ENCODE measurements at regions of chr6 and their contacts with region 1.

Region 1: DNA sequence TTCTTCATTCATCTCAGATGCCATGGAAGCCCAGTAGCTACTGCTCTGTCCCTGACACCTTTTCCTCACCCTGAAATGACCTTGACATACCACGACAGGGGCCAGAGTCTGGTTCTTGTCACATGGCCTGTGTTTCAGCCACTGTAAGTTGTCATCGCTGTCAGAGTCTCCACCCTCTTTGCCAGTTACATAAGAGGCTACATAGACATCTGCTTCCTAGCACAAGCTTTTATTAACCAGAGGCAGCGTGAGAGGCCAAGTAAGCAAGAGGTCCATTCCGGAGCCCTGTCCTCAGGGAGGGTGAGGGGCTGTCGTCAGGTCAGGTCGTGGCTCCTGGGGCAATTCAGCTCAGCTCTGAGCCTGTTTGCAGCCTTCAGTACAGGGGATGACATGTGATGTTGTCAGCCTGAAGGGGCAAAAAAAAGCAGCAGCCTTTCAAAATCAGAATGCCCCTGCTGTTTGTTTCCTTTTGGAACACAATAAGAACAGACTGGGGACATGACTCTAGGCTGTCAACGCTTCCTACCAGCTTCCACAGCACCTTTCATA is 146.3 kb downstream of the MTFR2 start:
- DNase-seq: peak; percentile 83 to 92 (median 85)
- ATAC-seq: peak; percentile 96 to 99 (median 98)
- H3K4me3 ChIP-seq: peak overlapping the region in 1 of 12 donors; percentile 16
- H3K27ac ChIP-seq: peak overlapping the region; percentile 67 to 90 (median 84)
- H3K4me1 ChIP-seq: peaks cover 0 to 77% (median 40%) of the 10 kb centered on the region in 12 donors
- H3K27me3 ChIP-seq: no peaks in the 10 kb centered on the region
- CTCF ChIP-seq: no peak
- POLR2A ChIP-seq: peak in 1 of 2 donors; percentile 40

Region 2: DNA sequence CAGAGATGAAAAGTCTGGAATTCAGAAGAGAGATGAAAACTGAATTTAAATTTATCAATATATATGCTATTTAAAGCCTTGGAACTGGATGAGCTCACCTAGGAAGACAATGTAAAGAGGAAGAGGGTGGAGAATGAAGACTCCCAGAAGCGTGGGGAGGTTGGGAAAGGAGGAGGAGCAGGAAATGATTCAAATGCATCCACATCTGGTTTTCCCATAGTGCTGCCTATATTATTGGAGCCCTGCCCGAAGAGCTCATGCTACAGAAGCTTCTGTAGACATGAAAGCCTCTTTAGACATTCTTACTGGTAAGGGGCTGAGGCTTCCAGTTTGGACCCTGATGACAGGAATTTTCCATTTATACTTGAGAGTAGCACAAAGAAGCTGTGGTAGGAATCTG is 233.1 kb before region 1 on chr6:
- intact Hi-C with region 1: no loop called
- DNase-seq: no peak
- ATAC-seq: peak in 2 of 4 donors; percentile 40 to 76
- H3K4me3 ChIP-seq: no peak overlapping the region
- H3K27ac ChIP-seq: peak overlapping the region in 9 of 12 donors; percentile 6 to 69 (median 53)
- H3K4me1 ChIP-seq: peaks cover 0 to 18% (median 8%) of the 10 kb centered on the region in 12 donors
- H3K27me3 ChIP-seq: no peaks in the 10 kb centered on the region
- CTCF ChIP-seq: no peak
- POLR2A ChIP-seq: no peak

Region 3: GRCh38 chr6:136031982-136032381 is 71.9 kb before region 1 on chr6:
- intact Hi-C with region 1: loop called in 5 of 10 experiments (anchors 5 to 10 kb)
- DNase-seq: peak in 1 of 5 donors; percentile 45
- ATAC-seq: peak in 2 of 4 donors; percentile 55
- H3K4me3 ChIP-seq: no peak overlapping the region
- H3K27ac ChIP-seq: peak overlapping the region in 1 of 12 donors; percentile 6
- H3K4me1 ChIP-seq: peaks cover 0 to 36% (median 22%) of the 10 kb centered on the region in 12 donors
- H3K27me3 ChIP-seq: no peaks in the 10 kb centered on the region
- CTCF ChIP-seq: peak; percentile 35 to 70 (median 58)
- POLR2A ChIP-seq: no peak

Region 4: GRCh38 chr6:136037876-136038460 is 65.9 kb before region 1 on chr6:
- intact Hi-C with region 1: loop called in 7 of 10 experiments (anchors 2 to 10 kb)
- DNase-seq: peak; percentile 26 to 73 (median 48)
- ATAC-seq: peak; percentile 44 to 59 (median 54)
- H3K4me3 ChIP-seq: peak overlapping the region; percentile 6 to 63 (median 55)
- H3K27ac ChIP-seq: peak overlapping the region; percentile 73 to 91 (median 84)
- H3K4me1 ChIP-seq: peaks cover 0 to 75% (median 37%) of the 10 kb centered on the region in 12 donors
- H3K27me3 ChIP-seq: no peaks in the 10 kb centered on the region
- CTCF ChIP-seq: peak in 9 of 12 donors; percentile 11 to 51 (median 35)
- POLR2A ChIP-seq: no peak

Region 5: DNA sequence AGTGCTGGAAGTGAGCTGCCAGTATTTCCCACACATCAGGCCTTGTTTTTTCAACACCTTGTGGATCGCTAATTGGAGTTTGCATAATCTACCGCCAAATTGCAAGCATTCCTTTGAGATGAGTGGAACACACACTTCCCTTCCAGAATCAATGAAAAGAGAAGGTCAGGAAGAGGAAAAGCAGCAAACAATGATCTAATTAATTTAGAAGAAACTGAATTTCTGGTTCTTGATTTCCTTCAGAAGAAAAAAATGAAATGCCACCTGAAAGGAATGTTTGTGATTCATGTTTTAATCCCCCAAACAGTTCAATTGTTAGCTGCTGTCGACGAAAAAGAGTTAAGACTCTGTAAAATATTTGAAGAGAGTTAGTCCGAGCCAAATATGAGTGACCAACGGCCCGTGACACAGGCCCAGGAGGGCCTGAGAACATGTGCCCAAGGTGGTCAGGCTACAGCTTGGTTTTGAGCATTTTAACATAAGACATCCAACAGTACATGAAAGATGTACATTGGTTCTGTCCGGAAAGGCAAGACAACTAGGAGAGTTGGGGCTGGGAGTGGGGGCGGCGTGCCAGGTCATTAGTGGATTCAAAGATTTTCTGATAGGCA is 36.0 kb before region 1 on chr6:
- intact Hi-C with region 1: loop called in 1 of 10 experiments (anchors 5 kb)
- DNase-seq: no peak
- ATAC-seq: peak in 1 of 4 donors; percentile 47
- H3K4me3 ChIP-seq: no peak overlapping the region
- H3K27ac ChIP-seq: peak overlapping the region in 11 of 12 donors; percentile 7 to 78 (median 45)
- H3K4me1 ChIP-seq: peaks cover 0 to 61% (median 22%) of the 10 kb centered on the region in 12 donors
- H3K27me3 ChIP-seq: no peaks in the 10 kb centered on the region
- CTCF ChIP-seq: no peak
- POLR2A ChIP-seq: no peak

Region 6: DNA sequence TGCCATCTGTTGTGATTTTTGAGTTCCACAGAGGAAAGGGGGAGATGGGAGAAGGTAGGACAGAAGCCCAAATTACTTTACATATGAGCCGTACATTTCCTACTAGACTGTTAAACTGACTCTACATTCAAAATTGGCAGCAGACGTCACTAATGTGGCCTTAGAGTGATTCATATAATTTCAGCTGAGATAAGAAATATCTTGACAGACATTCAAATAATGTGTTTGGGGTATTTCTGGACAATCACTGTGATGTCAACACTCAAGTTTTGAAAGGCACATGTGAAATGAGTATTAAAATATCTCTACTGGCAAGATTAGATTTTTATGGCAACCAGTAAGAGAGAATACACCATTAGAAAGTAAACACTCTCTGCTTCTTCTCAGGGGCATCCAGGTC is 42.3 kb after region 1 on chr6:
- intact Hi-C with region 1: loop called in 2 of 10 experiments (anchors 5 to 10 kb)
- DNase-seq: no peak
- ATAC-seq: peak; percentile 48 to 69 (median 60)
- H3K4me3 ChIP-seq: no peak overlapping the region
- H3K27ac ChIP-seq: peak overlapping the region; percentile 6 to 77 (median 30)
- H3K4me1 ChIP-seq: peaks cover 0 to 43% (median 11%) of the 10 kb centered on the region in 12 donors
- H3K27me3 ChIP-seq: no peaks in the 10 kb centered on the region
- CTCF ChIP-seq: no peak
- POLR2A ChIP-seq: no peak

Region 7: GRCh38 chr6:136158387-136158821 is 54.6 kb after region 1 on chr6:
- intact Hi-C with region 1: loop called in 1 of 10 experiments (anchors 10 kb)
- DNase-seq: peak; percentile 53 to 79 (median 72)
- ATAC-seq: peak; percentile 86 to 96 (median 90)
- H3K4me3 ChIP-seq: no peak overlapping the region
- H3K27ac ChIP-seq: peak overlapping the region in 11 of 12 donors; percentile 2 to 61 (median 23)
- H3K4me1 ChIP-seq: peaks cover 0 to 47% (median 11%) of the 10 kb centered on the region in 12 donors
- H3K27me3 ChIP-seq: no peaks in the 10 kb centered on the region
- CTCF ChIP-seq: peak in 8 of 12 donors; percentile 26 to 68 (median 36)
- POLR2A ChIP-seq: no peak

Region 8: GRCh38 chr6:137155830-137156229 is 1052.0 kb after region 1 on chr6:
- intact Hi-C with region 1: no loop called
- DNase-seq: no peak
- ATAC-seq: peak in 1 of 4 donors; percentile 34
- H3K4me3 ChIP-seq: no peak overlapping the region
- H3K27ac ChIP-seq: peak overlapping the region in 1 of 12 donors; percentile 5
- H3K4me1 ChIP-seq: peaks cover 0 to 30% (median under 1%) of the 10 kb centered on the region in 12 donors
- H3K27me3 ChIP-seq: no peaks in the 10 kb centered on the region
- CTCF ChIP-seq: no peak
- POLR2A ChIP-seq: no peak